Sigmoid colon (tissue), 7 donors: ENCODE measurements at regions of chr3 and their contacts with region 1.

Region 1: DNA sequence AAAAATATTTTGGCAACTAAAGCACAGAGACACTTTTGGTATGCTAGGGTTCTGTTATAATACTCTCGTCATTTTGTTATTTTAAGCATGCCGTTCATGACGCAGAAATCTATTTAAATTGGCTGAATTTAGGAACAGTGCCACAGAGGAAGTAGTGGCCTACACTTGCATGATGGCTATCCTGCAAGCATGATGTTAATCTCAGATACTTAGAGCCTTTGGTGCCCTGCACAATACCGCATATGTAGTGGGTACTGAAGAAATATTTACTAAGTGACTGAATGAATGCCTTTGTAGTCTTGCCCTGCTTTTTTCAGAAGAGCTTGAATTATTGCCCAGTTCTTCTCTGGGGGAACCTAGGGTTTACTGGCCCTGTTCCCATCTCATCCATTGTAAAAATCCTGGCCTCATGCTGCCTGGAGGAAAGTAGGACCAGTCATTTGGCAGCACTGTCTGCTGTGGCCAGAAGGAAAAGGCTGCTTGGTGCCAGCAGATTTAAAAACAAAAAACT is 79.0 kb downstream of the SERPINI1 start:
- DNase-seq: no peak
- H3K4me3 ChIP-seq: no peak overlapping the region
- H3K27ac ChIP-seq: peak overlapping the region in 3 of 4 donors; percentile 4 to 41 (median 37)
- H3K4me1 ChIP-seq: peaks cover 0 to 29% (median 27%) of the 10 kb centered on the region in 4 donors
- H3K27me3 ChIP-seq: no peaks in the 10 kb centered on the region
- CTCF ChIP-seq: no peak
- EP300 ChIP-seq: no peak
- POLR2A ChIP-seq: no peak

Region 2: DNA sequence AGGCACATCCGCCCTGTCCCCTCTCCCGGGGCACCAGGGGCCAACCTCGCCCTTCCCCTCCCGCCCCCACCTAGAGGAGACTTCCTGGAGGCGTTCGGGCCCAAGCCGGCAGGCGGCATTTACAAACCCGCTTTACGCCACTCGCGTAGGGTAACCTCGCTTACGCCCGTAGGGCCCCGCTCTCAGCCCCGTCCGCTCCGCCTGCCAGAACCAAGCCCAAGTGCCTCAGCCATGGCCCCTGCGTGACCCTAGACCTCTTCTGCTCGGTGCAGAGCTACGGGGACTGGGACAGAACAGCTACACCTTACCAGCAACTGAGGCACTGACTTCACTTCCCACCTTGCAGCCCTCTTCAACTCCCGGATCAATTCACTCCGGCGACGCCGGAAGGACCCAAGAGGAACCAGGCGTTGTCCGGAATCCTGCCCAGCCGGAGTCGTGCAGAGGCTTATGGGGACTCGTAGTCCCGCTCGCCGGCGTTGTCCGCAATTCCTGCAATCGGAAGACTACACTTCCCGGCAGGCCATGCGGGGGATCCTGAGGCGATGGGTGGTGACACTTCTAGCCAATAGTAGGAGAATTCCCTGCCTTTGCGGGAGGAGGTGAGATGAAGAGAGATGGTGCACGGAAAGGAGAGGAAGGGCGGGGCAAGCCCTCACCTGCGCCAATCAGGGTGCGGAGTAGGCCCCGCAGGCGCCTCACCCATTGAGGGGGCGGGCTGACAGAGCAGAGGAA is 79.8 kb before region 1 on chr3 and contains the start of gene PDCD10:
- intact Hi-C with region 1: loop called (anchors 5 kb)
- DNase-seq: peak; percentile 99
- H3K4me3 ChIP-seq: peak within 1 kb of the TSS; percentile 65 to 87 (median 84)
- H3K27ac ChIP-seq: peak within 1 kb of the TSS; percentile 89 to 94 (median 90)
- H3K4me1 ChIP-seq: peaks cover 2 to 30% (median 17%) of the 10 kb centered on the region in 4 donors
- H3K27me3 ChIP-seq: no peaks in the 10 kb centered on the region
- CTCF ChIP-seq: peak in 1 of 4 experiments; percentile 9
- EP300 ChIP-seq: no peak
- POLR2A ChIP-seq: peak; percentile 31 to 44
- total RNA-seq, gene PDCD10: 49.3 to 67.0 (median 60.7) TPM

Region 3: GRCh38 chr3:167864552-167864874 is 50.0 kb after region 1 on chr3:
- intact Hi-C with region 1: no loop called
- DNase-seq: no peak
- H3K4me3 ChIP-seq: no peak overlapping the region
- H3K27ac ChIP-seq: peak overlapping the region in 1 of 4 donors; percentile 3
- H3K4me1 ChIP-seq: no peaks in the 10 kb centered on the region
- H3K27me3 ChIP-seq: no peaks in the 10 kb centered on the region
- CTCF ChIP-seq: no peak
- EP300 ChIP-seq: no peak
- POLR2A ChIP-seq: no peak

Region 4: DNA sequence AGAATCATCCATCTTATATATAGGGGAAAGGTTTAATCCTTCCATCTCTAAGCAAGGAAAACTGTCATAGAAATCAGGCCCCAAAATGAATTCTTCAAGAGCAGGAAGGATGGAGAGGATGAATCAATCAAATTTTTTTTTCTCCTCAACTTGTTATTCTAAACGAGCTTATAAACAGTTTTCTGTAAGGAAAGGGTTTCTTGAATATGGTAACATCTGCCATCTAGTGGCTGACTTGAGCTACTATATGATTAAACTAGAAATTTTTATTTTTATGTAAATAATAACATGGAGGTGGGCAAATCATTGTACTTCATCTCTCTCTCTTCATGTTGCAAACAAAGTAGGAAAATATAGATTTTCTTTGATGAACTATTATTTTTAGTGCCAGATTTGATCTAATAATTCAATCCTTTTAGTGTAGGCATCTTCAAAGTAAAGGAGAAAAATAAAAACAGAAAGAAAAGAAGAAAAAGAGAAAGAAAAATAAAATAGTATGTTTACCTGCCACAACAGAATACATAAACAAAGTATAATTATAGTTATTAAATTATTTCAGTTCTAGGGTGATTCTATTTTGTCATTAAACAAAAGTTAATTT is 67.7 kb after region 1 on chr3:
- intact Hi-C with region 1: no loop called
- DNase-seq: no peak
- H3K4me3 ChIP-seq: no peak overlapping the region
- H3K27ac ChIP-seq: no peak overlapping the region
- H3K4me1 ChIP-seq: peaks cover 0 to 7% (median under 1%) of the 10 kb centered on the region in 4 donors
- H3K27me3 ChIP-seq: no peaks in the 10 kb centered on the region
- CTCF ChIP-seq: peak; percentile 12 to 56 (median 42)
- EP300 ChIP-seq: no peak
- POLR2A ChIP-seq: no peak